ENCODE measurements at regions of chr1 and their contacts with region 1.

Region 1: DNA sequence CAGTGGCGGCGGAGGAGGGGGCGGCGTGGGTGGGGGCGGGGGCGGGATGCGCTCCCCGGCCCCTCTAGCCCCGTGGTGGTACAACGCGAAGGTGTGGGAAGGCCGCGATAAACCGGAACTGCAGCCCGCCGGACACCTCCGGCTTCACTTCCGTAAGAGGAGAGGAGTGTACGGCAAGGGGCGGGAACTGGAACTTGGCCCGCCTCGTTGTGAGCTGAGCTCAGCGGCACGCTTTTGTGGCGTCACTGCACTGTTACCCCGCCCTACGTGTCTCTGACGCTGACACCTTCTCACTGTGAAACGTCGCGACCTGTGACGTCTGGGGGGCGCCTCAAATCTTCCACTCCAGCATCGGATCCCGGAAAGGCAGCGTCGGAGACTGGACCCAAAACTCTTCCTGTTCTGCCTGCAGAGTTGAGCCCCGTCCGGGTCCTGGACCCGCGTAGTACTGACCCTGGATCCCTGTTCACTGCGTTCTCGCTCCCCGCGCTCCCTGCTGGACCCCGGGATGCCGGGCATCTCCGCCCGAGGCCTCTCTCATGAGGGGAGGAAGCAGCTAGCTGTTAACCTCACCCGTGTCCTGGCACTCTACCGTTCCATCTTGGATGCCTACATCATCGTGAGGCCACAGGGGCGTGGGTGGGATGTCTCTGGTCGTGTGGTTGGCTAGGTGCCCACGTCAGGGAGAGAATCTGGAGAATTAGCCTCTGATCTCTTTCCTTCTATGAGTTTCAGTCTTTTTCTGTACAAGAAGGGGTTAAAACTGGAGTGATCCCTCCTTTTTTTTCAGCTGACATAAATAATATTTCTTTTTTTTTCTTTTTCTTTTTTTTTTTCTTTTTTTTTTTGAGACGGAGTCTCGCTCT is at the start of gene ISG20L2:
- DNase-seq: peak; percentile 99
- H3K4me3 ChIP-seq: peak within 1 kb of the TSS; percentile 64 to 98 (median 94)
- H3K27ac ChIP-seq: peak within 1 kb of the TSS; percentile 76 to 88
- H3K4me1 ChIP-seq: peaks cover 24 to 45% (median 39%) of the 10 kb centered on the region in 4 experiments
- H3K27me3 ChIP-seq: no peaks in the 10 kb centered on the region

Region 2: DNA sequence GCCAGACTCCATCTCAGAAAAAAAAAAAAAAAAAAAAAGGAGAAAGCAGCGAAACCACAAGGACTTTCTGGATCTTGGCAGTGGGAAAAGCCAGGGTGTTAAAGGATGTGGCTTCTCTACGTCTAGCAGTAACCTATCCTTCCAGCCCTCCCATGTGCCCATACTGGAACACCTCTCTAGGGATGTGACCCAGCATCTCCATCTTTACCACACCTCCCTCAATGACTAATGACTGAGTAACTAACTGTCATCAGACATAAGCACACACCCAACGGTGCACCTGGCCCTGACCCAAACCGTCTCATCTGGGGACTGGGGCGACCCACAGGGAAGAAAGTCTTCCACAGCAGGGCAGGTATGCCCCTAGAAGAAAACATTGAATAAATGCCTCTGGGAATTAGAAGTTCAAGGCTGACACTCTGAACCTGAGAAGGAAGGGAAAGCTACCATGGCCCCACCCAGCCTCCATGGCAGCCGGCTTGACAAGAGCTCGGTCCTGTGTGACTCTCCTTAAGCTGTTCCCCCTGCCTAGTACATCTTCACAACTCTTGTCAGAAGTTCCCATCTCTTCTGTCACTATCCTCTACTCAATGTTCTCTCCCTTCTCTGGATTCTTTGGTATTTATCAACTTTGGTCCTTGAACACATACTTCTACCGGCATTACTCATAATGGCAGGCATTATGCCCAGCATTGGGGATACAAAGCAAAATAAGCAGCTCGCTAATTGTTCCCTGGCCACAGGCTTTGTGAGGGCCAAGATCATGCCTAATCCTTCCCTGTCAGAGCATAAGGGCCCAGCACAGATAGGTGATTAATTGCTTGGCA is 466.2 kb before region 1 on chr1:
- CTCF ChIA-PET with region 1: no interaction called
- POLR2A ChIA-PET with region 1: no interaction called
- DNase-seq: no peak
- H3K4me3 ChIP-seq: no peak overlapping the region
- H3K27ac ChIP-seq: no peak overlapping the region
- H3K4me1 ChIP-seq: peaks cover 6 to 27% (median 17%) of the 10 kb centered on the region in 4 experiments
- H3K27me3 ChIP-seq: no peaks in the 10 kb centered on the region

Region 3: DNA sequence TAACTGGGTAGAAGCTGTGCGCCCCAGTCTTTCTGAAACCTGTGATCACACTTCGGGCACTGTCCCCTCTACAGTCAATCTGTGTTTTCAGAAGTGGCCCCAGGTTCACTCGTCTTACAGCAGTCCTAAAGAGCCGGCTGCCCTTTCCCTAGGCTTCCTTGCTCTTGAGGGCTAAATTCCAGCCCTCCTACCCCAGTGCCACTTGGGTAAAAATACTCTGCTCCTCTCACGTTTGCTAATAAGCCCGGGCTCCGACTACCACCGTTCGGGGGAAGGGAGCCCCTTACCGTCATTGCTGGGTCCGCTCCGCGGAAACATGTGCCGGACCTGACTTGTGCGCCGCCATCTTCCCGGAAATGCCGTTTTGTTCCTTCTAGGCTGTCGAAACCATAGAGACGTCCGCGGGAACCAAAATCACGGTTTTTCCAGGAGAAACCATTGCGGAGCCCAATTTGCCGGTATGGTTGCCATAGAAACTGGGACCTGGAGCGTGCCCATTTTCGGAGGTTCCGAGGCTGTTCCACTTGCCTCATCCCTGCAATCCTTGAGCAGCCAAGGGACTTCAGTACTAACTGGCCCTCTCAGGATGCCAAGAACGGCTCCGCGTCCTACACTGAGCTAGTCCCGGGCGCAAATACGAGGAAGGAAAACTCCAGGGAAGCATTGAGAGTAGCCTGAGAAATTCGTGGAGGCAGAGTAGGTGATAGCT is 127.6 kb before region 1 on chr1 and contains the start of gene GPATCH4:
- CTCF ChIA-PET with region 1: no interaction called
- POLR2A ChIA-PET with region 1: no interaction called
- DNase-seq: peak; percentile 75 to 81 (median 80)
- H3K4me3 ChIP-seq: peak within 1 kb of the TSS; percentile 60 to 91 (median 85)
- H3K27ac ChIP-seq: peak within 1 kb of the TSS; percentile 47 to 65
- H3K4me1 ChIP-seq: peaks cover 6 to 30% (median 22%) of the 10 kb centered on the region in 4 experiments
- H3K27me3 ChIP-seq: no peaks in the 10 kb centered on the region

Region 4: GRCh38 chr1:156659994-156660751 is 68.7 kb before region 1 on chr1:
- CTCF ChIA-PET with region 1: interaction called, 42 read pairs
- POLR2A ChIA-PET with region 1: no interaction called
- DNase-seq: peak; percentile 92 to 96 (median 95)
- H3K4me3 ChIP-seq: peak overlapping the region in 3 of 7 experiments; percentile 25 to 31 (median 26)
- H3K27ac ChIP-seq: peak overlapping the region in 1 of 2 experiments; percentile 81
- H3K4me1 ChIP-seq: peaks cover 3 to 87% (median 76%) of the 10 kb centered on the region in 4 experiments
- H3K27me3 ChIP-seq: peaks cover 0 to 26% (median 16%) of the 10 kb centered on the region in 5 experiments

Region 5: GRCh38 chr1:156705918-156706656 is 22.7 kb before region 1 on chr1:
- CTCF ChIA-PET with region 1: interaction called, 40 read pairs
- POLR2A ChIA-PET with region 1: interaction called, 3 read pairs
- DNase-seq: peak; percentile 50 to 75 (median 73)
- H3K4me3 ChIP-seq: peak overlapping the region in 6 of 7 experiments; percentile 19 to 70 (median 52)
- H3K27ac ChIP-seq: no peak overlapping the region
- H3K4me1 ChIP-seq: peaks cover 0 to 27% (median 21%) of the 10 kb centered on the region in 4 experiments
- H3K27me3 ChIP-seq: peaks cover 7 to 75% (median 30%) of the 10 kb centered on the region in 5 experiments

Region 6: DNA sequence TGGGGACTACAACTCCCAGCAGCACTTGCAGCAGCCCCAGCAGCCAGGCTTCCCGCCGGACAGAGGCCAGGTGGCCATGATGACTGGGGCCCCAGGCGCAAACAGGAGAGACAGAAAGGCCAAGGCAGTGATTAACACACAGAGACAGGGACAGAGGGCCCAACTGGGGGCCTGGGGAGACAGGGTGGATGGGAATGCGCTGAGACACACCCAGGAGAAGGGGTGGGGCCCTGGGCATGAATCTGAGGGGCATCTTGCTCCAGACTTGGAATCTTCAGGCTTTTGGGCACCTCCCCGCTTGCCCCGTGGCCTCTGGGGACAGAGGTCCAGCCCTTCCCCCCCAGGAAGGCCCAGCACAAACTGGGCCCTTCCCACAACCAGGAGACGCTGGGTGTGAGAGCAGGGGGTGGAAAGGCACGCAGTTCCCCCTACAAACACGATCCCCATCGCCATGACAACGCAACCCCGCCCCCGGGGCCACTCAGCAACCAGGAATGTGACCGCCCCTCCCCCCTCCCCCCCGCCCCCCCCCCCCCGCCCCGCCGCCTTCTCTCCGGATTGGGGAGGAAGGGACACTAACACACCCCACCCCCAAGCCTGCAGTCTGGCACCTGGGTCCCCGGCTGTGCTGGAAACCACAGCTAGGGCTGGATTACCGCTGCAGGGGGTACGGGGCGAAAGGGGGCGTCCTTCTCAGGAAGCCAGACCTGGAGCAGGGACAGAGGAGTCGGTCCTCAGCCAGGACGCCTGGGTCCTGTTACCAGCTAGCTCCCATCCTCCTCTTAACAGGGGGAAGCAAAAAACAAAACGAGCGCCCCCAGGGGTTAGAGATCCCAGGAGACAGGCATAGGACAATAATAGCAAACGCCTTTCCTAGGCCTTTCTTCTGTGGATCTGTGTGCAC is 18.1 kb after region 1 on chr1:
- CTCF ChIA-PET with region 1: interaction called, 32 read pairs
- POLR2A ChIA-PET with region 1: interaction called, 10 read pairs
- DNase-seq: peak; percentile 62 to 83 (median 83)
- H3K4me3 ChIP-seq: peak overlapping the region; percentile 34 to 100 (median 90)
- H3K27ac ChIP-seq: peak overlapping the region; percentile 88 to 95
- H3K4me1 ChIP-seq: peaks cover 30 to 74% (median 69%) of the 10 kb centered on the region in 4 experiments
- H3K27me3 ChIP-seq: no peaks in the 10 kb centered on the region

Region 7: DNA sequence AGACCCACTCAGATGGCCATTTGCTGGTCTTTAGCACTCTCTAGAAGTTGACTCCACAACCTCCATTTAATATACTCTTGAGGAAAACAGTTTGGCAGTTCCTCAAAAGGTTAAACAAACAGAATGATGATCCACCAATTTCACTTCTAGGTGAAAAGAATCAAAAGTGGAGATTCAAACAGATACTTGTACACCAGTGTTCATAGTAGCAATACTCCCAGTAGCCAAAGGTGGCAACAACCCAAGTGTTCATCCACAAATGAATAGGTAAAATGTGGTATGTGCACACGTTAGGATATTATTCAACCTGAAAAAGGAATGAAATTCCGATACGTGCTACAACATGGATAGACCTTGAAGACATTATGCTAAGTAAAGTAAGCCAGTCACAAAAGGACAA is 44.8 kb after region 1 on chr1:
- CTCF ChIA-PET with region 1: interaction called, 24 read pairs
- POLR2A ChIA-PET with region 1: no interaction called
- DNase-seq: peak in 2 of 3 donors; percentile 50 to 54
- H3K4me3 ChIP-seq: no peak overlapping the region
- H3K27ac ChIP-seq: no peak overlapping the region
- H3K4me1 ChIP-seq: peaks cover 10 to 25% (median 17%) of the 10 kb centered on the region in 4 experiments
- H3K27me3 ChIP-seq: no peaks in the 10 kb centered on the region

Region 8: GRCh38 chr1:156797212-156797871 is 68.5 kb after region 1 on chr1:
- CTCF ChIA-PET with region 1: interaction called, 32 read pairs
- POLR2A ChIA-PET with region 1: interaction called, 5 read pairs
- DNase-seq: peak; percentile 68 to 77 (median 76)
- H3K4me3 ChIP-seq: no peak overlapping the region
- H3K27ac ChIP-seq: no peak overlapping the region
- H3K4me1 ChIP-seq: peaks cover 0 to 7% (median 5%) of the 10 kb centered on the region in 4 experiments
- H3K27me3 ChIP-seq: no peaks in the 10 kb centered on the region

Region 9: GRCh38 chr1:156927215-156928042 is 198.6 kb after region 1 on chr1:
- CTCF ChIA-PET with region 1: interaction called, 10 read pairs
- POLR2A ChIA-PET with region 1: no interaction called
- DNase-seq: peak; percentile 77 to 82 (median 81)
- H3K4me3 ChIP-seq: peak overlapping the region in 5 of 7 experiments; percentile 9 to 71 (median 53)
- H3K27ac ChIP-seq: no peak overlapping the region
- H3K4me1 ChIP-seq: peaks cover 0 to 51% (median 33%) of the 10 kb centered on the region in 4 experiments
- H3K27me3 ChIP-seq: peaks cover 1 to 63% (median 33%) of the 10 kb centered on the region in 5 experiments

Region 10: DNA sequence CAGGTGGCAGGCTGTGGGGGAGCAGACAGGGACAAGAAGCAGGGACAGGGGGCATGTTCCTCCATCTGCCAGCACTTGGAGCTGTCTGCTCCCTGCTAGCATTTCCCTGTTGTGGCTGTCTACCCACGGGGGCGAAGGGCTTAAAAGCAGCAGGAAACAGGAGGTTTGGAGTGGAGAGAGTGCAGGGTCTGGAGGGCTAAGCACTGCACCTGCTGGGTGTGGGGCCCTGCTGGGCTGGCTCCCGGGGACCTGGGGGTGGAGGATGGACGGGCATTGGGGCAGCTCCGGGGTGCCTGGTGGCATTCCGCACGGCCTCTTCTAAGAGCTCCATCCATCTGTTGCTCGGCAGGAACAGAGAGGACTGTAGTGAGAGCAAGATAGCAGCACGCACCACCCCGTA is 212.8 kb after region 1 on chr1:
- CTCF ChIA-PET with region 1: no interaction called
- POLR2A ChIA-PET with region 1: no interaction called
- DNase-seq: no peak
- H3K4me3 ChIP-seq: no peak overlapping the region
- H3K27ac ChIP-seq: no peak overlapping the region
- H3K4me1 ChIP-seq: no peaks in the 10 kb centered on the region
- H3K27me3 ChIP-seq: no peaks in the 10 kb centered on the region